ENCODE measurements at regions of chr6 and their contacts with region 1.

Region 1: DNA sequence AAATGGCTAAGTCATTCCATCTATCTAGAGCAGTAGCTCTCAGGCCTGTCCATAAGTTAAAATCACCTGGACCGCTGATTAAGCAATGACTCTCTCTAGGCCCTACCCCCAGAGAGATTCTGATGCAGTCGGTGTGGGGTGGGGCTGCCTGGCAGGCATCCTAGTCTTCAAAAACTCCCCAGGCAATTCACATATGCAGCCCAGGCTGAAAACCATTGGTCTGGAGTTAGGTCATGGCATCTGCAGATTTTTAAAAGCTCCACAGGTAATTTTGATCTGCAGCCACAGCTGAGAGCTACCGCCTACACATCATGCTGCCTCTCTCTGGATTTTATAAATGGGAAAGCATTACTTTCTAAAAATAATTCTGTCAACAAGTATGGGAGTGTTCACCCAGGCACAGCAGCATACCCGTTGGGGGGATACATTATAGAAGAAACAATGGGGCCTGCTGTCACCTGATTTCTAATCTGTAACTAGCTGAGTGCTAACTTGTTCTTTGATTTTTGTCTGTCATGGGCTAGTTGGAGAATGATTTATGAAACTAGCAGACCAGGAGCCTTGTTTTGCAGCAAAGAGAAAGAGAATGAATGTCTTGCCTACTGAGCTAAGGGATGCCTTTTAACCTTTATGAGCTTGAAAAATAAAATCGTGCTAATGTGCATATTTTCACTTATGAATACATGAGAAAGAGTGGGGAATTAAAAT is 44.1 kb upstream of the ATXN1 start:
- DNase-seq: no peak
- ATAC-seq: peak; percentile 38

Region 2: DNA sequence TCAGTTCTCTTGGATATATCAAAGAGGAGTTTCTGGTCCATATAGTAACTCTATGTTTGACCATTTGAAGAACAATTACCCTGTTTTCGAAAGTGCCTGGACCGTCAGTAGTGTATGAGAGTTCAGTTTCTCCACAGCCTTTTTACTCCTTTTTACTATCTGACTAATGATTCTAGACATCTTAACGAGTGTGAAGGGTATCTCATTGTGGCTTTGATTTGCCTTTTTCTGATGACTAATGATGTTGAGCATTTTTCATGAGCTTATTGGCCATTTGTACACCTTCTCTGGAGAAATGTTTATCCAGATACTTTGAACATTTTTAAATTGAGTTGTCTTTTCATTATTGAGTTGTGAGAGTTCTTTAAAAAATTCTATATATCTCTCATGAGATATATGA is 70.8 kb after region 1 on chr6:
- intact Hi-C with region 1: loop called (anchors 5 kb)
- DNase-seq: no peak
- ATAC-seq: no peak